ENCODE measurements at regions of chr11 and their contacts with region 1.

Region 1: DNA sequence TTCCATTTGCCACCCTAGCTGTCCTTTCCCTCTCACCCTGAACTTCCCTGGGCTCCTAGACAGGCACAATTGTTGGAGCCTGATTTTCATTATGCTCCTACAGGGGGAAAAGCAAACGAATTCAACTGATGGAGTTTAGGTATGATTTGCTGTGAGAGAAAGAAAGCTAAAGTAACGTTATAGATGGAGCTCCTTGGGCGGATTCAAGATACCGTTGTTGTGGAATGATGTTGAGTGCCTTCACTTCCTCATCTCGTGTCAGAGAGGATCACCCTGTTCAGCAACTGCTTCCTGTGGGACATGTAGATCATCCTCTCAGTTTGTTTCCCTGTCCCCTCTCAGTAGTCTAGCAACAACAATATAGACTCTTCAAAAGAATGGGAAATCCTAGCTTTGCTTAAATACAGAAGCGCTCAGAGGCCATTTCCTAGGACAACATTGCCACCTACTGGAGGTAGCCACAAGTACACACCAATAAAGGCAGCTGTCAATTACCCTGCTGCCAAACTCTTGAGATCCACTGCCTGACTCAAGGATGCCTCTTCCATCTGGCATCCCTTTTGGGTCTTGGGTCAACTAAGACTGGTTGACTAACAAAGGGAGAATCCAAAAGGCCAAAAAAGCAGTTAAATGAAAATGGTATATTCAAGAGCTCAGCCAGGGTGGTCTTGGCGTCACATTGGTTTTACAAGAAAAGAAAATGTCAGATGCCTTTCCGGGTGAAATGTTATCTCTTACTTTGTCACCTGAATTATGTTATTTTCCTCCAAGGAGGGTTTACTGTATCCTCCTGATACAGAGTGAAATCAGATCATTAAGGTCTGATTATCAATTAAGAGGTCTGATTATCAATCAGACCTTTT is 13.5 kb upstream of the DTX4 start:
- DNase-seq: no peak
- ATAC-seq: peak; percentile 98
- H3K4me3 ChIP-seq: no peak overlapping the region
- H3K27ac ChIP-seq: no peak overlapping the region
- H3K4me1 ChIP-seq: peaks cover 2% of the 10 kb centered on the region
- H3K27me3 ChIP-seq: no peaks in the 10 kb centered on the region
- CTCF ChIP-seq: peak; percentile 74 to 97 (median 92); a peak in 5 of 6 replicates
- EP300 ChIP-seq: no peak
- POLR2A ChIP-seq: no peak
- RAD21 ChIP-seq: peak; percentile 91

Region 2: DNA sequence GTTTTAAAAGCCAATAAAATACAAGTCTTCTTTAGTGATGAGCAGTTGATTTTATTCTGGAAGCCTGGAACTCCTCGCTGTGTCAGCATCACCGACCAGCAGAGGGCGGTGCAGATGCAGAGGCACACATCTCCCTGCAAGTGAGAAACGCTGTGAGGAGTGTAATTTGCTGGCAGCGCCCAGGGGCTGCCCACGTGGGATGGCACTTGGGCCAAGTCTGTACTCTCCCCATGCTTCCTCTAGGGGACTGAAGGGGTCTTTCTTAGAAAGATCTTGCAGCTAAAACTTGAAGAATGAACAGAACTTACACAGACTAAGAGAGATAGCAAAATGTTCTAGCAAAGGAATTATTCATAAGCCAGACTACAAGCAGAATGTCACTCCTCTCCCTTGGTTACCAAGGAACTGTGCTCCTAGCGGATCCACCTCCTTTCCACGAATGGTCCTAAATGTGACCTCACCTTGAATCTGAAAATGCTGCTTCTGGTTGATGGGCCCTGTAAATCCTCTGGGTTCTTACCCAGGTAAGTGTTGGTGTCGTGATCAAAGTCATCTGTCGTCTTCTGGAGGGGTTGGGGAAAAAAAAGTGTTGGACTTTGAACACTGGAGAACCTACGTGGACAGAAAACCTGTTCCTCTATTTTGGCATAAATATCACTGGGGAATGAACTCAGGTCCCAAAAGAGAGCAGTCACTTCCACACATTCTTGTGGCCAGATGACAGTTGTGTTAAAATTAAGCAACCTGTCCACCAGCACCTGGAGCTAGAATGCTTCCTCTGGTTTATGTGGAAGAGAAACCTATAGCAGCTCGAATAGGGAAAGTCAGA is 504.1 kb before region 1 on chr11:
- CTCF ChIA-PET with region 1: interaction called, 10 read pairs
- POLR2A ChIA-PET with region 1: no interaction called
- RAD21 ChIA-PET with region 1: no interaction called
- SMC1A ChIA-PET with region 1: no interaction called
- in situ Hi-C with region 1: loop called (anchors 10 kb)
- intact Hi-C with region 1: loop called (anchors 2 kb)
- DNase-seq: peak; percentile 38
- ATAC-seq: peak; percentile 98
- H3K4me3 ChIP-seq: no peak overlapping the region
- H3K27ac ChIP-seq: no peak overlapping the region
- H3K4me1 ChIP-seq: peaks cover 4% of the 10 kb centered on the region; the same call in 1 of the 2 replicates
- H3K27me3 ChIP-seq: no peaks in the 10 kb centered on the region
- CTCF ChIP-seq: peak; percentile 89 to 90 (median 89)
- EP300 ChIP-seq: no peak
- POLR2A ChIP-seq: no peak
- RAD21 ChIP-seq: peak; percentile 76

Region 3: GRCh38 chr11:58770627-58771457 is 387.6 kb before region 1 on chr11:
- CTCF ChIA-PET with region 1: no interaction called
- POLR2A ChIA-PET with region 1: no interaction called
- RAD21 ChIA-PET with region 1: no interaction called
- SMC1A ChIA-PET with region 1: no interaction called
- in situ Hi-C with region 1: no loop called
- intact Hi-C with region 1: no loop called
- DNase-seq: no peak
- ATAC-seq: no peak
- H3K4me3 ChIP-seq: no peak overlapping the region
- H3K27ac ChIP-seq: no peak overlapping the region
- H3K4me1 ChIP-seq: no peaks in the 10 kb centered on the region
- H3K27me3 ChIP-seq: no peaks in the 10 kb centered on the region
- CTCF ChIP-seq: no peak
- EP300 ChIP-seq: no peak
- POLR2A ChIP-seq: no peak
- RAD21 ChIP-seq: no peak

Region 4: DNA sequence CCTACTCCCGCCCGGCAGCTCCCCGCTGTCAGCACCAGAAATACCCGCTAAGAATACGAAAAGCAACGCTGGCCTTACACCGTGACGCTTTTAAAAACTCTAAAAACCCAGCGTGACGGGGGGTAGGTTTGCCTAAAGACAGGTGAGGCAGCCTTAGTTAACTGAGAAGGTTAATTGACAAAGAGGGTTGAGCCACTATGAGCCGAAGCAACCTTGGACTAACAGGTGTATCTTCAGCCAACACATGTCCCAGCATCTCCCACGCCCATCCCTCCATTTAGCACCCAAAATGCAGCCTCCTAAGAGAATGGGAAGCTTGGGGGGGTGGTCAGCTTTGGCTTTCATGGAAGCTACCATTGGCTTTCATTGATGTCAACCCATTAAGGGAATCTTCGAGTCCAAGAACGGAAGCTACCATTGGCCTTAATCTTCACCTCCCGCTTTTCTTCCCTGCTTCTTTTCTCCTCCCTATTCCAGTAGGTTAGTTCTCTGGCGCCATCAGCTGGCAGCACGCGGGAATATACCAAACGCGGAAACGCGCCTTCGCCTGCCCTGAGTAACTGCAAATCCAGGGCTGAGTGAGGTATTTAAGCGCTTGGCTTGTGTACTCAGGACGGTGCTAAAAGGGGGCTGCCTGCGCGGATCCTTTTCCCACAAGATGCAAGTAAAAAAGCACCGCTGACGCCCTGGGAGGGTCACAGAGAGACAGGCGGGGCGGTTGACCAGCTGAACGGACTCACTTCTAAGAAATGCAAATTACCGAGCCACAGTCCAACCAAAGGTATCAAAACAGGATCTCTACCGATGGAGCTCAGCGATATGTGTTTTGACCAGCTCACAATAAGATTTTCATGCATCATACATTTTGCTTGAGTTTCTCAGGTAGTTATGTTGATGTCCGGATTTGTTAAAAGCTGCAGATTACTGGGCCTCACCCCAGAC is 257.7 kb before region 1 on chr11:
- CTCF ChIA-PET with region 1: interaction called, 3 read pairs
- POLR2A ChIA-PET with region 1: no interaction called
- RAD21 ChIA-PET with region 1: interaction called, 5 read pairs
- SMC1A ChIA-PET with region 1: interaction called, 6 read pairs
- in situ Hi-C with region 1: no loop called
- intact Hi-C with region 1: loop called (anchors 5 kb)
- DNase-seq: peak; percentile 16
- ATAC-seq: peak; percentile 90
- H3K4me3 ChIP-seq: no peak overlapping the region
- H3K27ac ChIP-seq: no peak overlapping the region
- H3K4me1 ChIP-seq: no peaks in the 10 kb centered on the region
- H3K27me3 ChIP-seq: peaks cover 1 to 7% of the 10 kb centered on the region in 2 experiments
- CTCF ChIP-seq: peak; percentile 51 to 66 (median 62); a peak in 5 of 6 replicates
- EP300 ChIP-seq: no peak
- POLR2A ChIP-seq: no peak
- RAD21 ChIP-seq: peak; percentile 52; the same call in 1 of the 2 replicates

Region 5: GRCh38 chr11:59062602-59063529 is 95.6 kb before region 1 on chr11:
- CTCF ChIA-PET with region 1: interaction called, 39 read pairs
- POLR2A ChIA-PET with region 1: no interaction called
- RAD21 ChIA-PET with region 1: interaction called, 29 read pairs
- SMC1A ChIA-PET with region 1: interaction called, 15 read pairs
- in situ Hi-C with region 1: no loop called
- intact Hi-C with region 1: no loop called
- DNase-seq: no peak
- ATAC-seq: no peak
- H3K4me3 ChIP-seq: no peak overlapping the region
- H3K27ac ChIP-seq: no peak overlapping the region
- H3K4me1 ChIP-seq: peaks cover 6% of the 10 kb centered on the region
- H3K27me3 ChIP-seq: no peaks in the 10 kb centered on the region
- CTCF ChIP-seq: no peak
- EP300 ChIP-seq: no peak
- POLR2A ChIP-seq: no peak
- RAD21 ChIP-seq: no peak

Region 6: DNA sequence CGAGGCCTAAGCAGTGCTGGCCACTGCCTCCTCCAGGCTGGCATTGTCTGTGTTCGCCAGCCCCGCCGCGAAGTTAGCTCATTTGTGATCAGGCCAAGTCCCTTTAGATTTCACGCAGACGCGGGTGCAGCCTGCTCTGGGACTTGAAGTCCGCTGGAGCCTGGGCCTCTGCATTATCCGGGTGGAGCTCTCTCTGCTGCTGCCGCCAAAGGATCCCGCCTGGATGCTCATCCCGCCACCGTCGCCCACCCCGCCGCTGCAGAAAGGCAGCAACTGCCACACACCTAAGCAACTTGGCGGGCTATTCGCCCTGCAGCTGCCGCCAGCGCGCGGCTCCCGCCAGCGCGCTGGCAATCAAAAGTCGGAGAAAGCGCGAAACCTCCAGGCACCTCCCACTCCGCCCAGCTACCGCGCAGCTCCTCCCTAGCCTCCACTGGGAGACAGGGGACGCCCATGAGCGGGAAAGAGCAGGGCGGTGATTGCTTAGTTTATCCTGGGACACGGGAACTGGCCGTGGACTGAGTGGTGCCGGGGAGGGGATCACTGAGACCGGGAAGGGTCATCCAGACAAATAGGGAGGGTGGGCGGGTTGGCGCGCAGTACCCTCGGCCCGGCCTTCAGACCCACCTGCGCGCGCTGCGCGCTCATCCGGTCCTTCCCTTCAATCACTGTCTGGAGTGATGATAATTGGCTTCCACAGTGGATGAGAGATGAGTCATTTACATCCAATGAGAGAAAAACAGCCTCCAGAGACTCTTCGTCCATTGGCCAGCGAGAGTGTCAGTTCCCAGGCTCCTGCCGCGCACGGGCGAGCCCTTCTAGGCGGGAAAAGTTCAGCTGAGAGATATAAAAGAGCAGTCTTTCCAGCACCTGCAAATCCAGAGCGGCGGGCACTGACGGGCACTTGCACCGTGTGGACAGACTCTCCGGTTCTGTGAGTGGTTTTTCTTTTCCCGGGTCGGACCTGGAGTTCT is 51.8 kb before region 1 on chr11 and contains the start of gene FAM111B:
- CTCF ChIA-PET with region 1: interaction called, 34 read pairs
- POLR2A ChIA-PET with region 1: interaction called, 3 read pairs
- RAD21 ChIA-PET with region 1: interaction called, 5 read pairs
- SMC1A ChIA-PET with region 1: interaction called, 11 read pairs
- in situ Hi-C with region 1: no loop called
- intact Hi-C with region 1: no loop called
- DNase-seq: peak; percentile 84
- ATAC-seq: peak; percentile 85
- H3K4me3 ChIP-seq: peak within 1 kb of the TSS; percentile 79
- H3K27ac ChIP-seq: peak within 1 kb of the TSS; percentile 89
- H3K4me1 ChIP-seq: peaks cover 7% of the 10 kb centered on the region
- H3K27me3 ChIP-seq: no peaks in the 10 kb centered on the region
- CTCF ChIP-seq: no peak
- EP300 ChIP-seq: no peak
- POLR2A ChIP-seq: peak; percentile 79
- RAD21 ChIP-seq: no peak
- polyA plus RNA-seq, gene FAM111B: 42.0 to 65.3 TPM

Region 7: DNA sequence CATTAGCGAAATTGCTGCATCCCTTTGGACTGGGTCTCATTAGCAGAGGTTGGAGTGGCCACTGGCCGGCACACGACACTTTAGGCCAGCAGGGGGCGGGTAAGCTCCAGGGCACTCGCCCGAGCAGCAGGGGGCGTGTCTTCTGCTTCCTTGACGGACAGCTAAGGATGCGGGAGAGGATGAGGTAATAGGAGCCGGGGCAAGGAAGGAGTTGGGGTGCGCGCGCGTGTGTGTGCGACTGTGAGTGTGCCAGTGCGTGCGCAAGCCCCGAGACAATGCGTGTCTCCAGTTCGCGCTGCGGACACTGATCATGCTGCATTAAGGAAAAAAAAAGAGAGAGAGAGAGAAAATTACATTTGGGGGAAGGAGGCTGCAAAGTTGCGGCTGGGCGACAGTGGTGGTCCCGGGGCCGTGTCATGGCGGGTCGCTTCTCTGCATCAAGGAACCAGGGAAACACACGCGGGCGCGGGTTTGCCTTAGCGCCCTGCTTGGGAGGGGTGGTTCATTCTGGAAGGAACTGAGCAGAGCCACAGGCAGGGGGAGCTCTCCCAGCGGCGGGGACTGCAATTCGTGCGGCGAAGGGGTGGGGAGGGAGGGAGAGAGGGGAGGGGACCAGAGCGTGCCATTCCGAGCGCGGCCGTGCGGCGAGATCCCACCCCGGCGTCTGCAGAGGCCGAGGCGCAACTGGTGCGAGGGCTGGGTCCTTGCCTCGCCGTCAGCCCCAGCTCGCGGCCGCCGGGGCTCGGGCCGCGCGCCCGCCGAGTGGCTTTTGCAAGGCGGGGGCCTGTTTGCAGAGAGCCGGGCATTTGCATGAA is 13.3 kb after region 1 on chr11 and contains the start of gene DTX4:
- CTCF ChIA-PET with region 1: interaction called, 59 read pairs
- POLR2A ChIA-PET with region 1: no interaction called
- RAD21 ChIA-PET with region 1: interaction called, 5 read pairs
- SMC1A ChIA-PET with region 1: interaction called, 8 read pairs
- in situ Hi-C with region 1: no loop called
- intact Hi-C with region 1: no loop called
- DNase-seq: peak; percentile 57
- ATAC-seq: peak; percentile 76
- H3K4me3 ChIP-seq: peak within 1 kb of the TSS; percentile 93
- H3K27ac ChIP-seq: peak within 1 kb of the TSS; percentile 84
- H3K4me1 ChIP-seq: peaks cover 6% of the 10 kb centered on the region
- H3K27me3 ChIP-seq: no peaks in the 10 kb centered on the region
- CTCF ChIP-seq: peak; percentile 97 to 98 (median 97)
- EP300 ChIP-seq: no peak
- POLR2A ChIP-seq: 0 out of 2 replicates have a peak, but pooled peaks have one; percentile 69
- RAD21 ChIP-seq: peak; percentile 92
- polyA plus RNA-seq, gene DTX4: 5.9 to 6.9 TPM

Region 8: DNA sequence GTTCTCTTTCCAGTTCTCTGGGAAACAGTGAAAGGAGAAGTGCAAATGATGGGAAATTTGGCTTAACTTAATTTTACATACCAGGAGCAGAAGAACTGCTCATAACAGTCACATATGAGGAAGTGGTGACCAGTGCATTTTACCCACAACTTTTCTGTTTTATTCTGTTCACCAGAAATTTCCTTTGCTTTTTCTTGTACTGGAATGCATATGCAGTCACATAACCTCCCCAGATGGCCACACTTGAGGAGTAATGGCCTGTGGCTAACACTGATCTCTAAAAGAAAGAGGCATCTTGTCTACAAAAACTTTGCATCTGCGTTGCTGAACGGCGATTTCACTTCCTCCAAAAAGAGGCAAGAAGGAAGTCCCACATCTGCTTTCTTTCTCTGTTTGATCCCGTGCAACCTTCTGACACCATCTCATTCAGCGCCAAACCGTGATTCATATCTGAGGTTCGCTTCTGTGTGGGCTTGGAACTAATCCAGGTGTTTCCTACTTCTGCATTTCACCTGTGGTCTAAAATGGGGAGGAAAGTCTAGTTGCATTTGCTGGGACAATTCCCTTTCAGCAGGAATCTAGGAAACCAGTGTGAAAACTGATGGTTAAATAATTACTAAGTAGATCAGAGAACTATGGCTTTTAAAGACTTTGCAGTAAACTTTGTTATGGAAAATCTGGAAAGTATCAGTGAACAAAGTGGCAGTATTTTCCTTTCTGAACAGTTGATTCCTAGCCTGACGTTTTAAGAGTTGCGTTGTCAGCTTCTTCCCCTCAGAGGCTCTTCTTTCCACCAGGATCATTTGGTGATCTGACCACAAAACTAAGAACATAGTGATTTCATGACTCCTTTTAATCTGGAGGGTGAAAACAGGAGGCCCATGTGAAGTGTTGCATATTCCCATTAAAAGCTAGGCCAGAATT is 58.5 kb after region 1 on chr11:
- CTCF ChIA-PET with region 1: interaction called, 12 read pairs
- POLR2A ChIA-PET with region 1: no interaction called
- RAD21 ChIA-PET with region 1: no interaction called
- SMC1A ChIA-PET with region 1: interaction called, 5 read pairs
- in situ Hi-C with region 1: no loop called
- intact Hi-C with region 1: no loop called
- DNase-seq: peak; percentile 99
- ATAC-seq: peak; percentile 88
- H3K4me3 ChIP-seq: no peak overlapping the region
- H3K27ac ChIP-seq: peak overlapping the region; percentile 91
- H3K4me1 ChIP-seq: peaks cover 76% of the 10 kb centered on the region
- H3K27me3 ChIP-seq: no peaks in the 10 kb centered on the region
- CTCF ChIP-seq: no peak
- EP300 ChIP-seq: peak; percentile 99 to 100
- POLR2A ChIP-seq: no peak
- RAD21 ChIP-seq: peak; percentile 40

Region 9: GRCh38 chr11:59336176-59336575 is 177.7 kb after region 1 on chr11:
- CTCF ChIA-PET with region 1: no interaction called
- POLR2A ChIA-PET with region 1: no interaction called
- RAD21 ChIA-PET with region 1: no interaction called
- SMC1A ChIA-PET with region 1: no interaction called
- in situ Hi-C with region 1: no loop called
- intact Hi-C with region 1: no loop called
- DNase-seq: no peak
- ATAC-seq: no peak
- H3K4me3 ChIP-seq: no peak overlapping the region
- H3K27ac ChIP-seq: no peak overlapping the region
- H3K4me1 ChIP-seq: no peaks in the 10 kb centered on the region
- H3K27me3 ChIP-seq: no peaks in the 10 kb centered on the region
- CTCF ChIP-seq: no peak
- EP300 ChIP-seq: no peak
- POLR2A ChIP-seq: no peak
- RAD21 ChIP-seq: no peak